ENCODE measurements at regions of chr7 and their contacts with region 1.

Region 1: GRCh38 chr7:26857510-26858240 is 6.7 kb downstream of the SKAP2 start:
- DNase-seq: peak; percentile 61
- ATAC-seq: peak; percentile 75
- H3K4me3 Mint-ChIP-seq: peak overlapping the region; percentile 62
- H3K27ac Mint-ChIP-seq: no peak overlapping the region
- H3K4me1 Mint-ChIP-seq: peaks cover 32% of the 10 kb centered on the region
- H3K27me3 Mint-ChIP-seq: peaks cover 86% of the 10 kb centered on the region
- CTCF ChIP-seq: no peak

Region 2: DNA sequence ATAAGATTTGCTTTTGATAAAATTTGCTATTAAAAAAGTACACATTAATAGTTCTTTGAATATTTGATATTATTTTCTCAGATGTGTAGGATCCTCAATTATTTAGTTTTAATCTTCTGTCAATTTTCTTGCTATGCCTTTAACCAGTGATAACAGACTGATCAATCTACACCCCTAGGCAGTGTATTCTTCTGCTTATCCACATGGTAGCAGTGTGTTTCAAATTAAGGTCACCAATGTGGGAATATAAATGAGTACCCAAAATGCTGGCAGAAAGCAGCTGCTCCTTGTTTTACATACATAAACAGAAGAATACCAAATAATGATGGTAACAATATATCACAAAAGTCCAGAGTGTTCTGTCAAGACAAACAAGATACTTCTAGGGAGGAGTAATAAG is 80.3 kb before region 1 on chr7:
- CTCF ChIA-PET with region 1: no interaction called
- POLR2A ChIA-PET with region 1: no interaction called
- DNase-seq: no peak
- ATAC-seq: no peak
- H3K4me3 Mint-ChIP-seq: no peak overlapping the region
- H3K27ac Mint-ChIP-seq: no peak overlapping the region
- H3K4me1 Mint-ChIP-seq: peaks cover 3% of the 10 kb centered on the region; the same call in 1 of the 2 replicates
- H3K27me3 Mint-ChIP-seq: no peaks in the 10 kb centered on the region
- CTCF ChIP-seq: no peak

Region 3: DNA sequence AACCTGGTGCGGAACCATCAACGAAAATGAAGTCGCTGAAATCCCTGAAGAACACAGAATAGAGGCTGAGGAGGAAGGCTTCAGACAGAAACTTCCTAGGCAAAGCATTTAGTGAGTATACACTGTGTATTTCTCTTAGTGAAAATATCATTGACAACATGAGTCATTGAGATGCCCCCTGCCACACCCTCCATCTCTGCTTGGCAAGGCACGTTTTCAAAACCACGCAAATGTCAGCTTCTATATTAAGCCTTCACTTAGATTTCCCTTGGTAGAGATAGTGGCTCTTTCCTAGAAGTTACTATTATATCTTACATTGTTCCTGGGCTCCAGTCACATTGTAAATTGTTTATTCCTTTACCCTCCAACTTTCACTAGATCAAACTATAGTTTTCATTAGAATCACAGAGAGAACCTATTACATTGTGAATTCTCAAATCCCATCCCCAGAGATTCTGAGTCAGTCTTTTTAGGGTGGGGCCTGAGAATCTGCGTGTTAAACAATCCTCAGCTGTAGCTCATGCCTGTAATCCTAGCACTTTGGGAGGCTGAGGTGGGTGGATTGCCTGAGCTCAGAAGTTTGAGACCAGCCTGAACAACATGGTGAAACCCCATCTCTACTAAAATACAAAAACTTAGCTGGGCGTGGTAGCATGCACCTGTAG is 11.3 kb after region 1 on chr7:
- CTCF ChIA-PET with region 1: no interaction called
- POLR2A ChIA-PET with region 1: no interaction called
- DNase-seq: no peak
- ATAC-seq: no peak
- H3K4me3 Mint-ChIP-seq: no peak overlapping the region
- H3K27ac Mint-ChIP-seq: no peak overlapping the region
- H3K4me1 Mint-ChIP-seq: peaks cover 1% of the 10 kb centered on the region; the same call in 1 of the 2 replicates
- H3K27me3 Mint-ChIP-seq: peaks cover 29% of the 10 kb centered on the region
- CTCF ChIP-seq: no peak

Region 4: DNA sequence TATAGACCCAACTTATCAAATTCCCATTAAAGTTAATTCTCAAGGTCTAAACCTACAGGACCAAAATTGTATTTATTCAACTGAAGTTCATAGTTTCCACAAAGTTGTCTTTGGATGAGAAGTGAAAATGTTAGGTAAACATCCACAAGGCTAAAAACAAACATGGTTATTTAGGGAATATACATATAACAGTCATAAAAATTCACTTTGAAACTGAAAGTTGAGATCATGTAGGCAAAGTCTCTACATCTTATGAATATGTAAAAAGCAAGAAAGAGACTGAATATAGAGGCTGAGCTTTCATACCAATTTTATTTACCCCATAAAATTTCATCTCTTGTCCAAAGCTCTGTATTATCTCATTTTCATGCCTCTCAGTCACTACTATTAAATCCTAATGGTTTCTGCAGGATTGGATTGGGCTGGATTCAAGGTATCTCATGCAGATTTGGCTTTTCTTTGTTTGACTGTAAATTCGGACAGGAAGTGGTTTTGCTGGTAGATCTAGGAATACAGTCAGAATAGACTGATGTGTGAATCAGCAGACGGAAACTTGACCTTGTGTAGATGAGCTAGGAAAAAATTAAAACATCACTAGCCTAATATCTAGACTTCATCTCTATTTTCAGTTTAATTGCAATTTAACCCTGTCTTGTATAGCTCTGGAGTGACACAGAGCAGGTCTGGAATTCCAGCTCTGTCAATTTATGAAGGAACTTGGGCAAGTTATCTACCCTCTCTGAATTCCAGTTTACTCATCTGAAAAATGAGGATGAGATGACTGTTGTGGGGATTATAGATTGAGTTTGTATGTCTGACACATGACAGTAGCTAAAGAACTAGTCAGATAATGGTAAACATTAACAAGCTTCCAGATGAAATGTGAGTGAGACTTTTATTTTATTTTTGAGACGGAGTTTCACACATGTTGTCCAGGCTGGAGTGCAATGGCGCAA is 34.0 kb after region 1 on chr7:
- CTCF ChIA-PET with region 1: no interaction called
- POLR2A ChIA-PET with region 1: no interaction called
- DNase-seq: no peak
- ATAC-seq: no peak
- H3K4me3 Mint-ChIP-seq: no peak overlapping the region
- H3K27ac Mint-ChIP-seq: no peak overlapping the region
- H3K4me1 Mint-ChIP-seq: no peaks in the 10 kb centered on the region
- H3K27me3 Mint-ChIP-seq: no peaks in the 10 kb centered on the region; the same call in 1 of the 2 replicates
- CTCF ChIP-seq: no peak

Region 5: DNA sequence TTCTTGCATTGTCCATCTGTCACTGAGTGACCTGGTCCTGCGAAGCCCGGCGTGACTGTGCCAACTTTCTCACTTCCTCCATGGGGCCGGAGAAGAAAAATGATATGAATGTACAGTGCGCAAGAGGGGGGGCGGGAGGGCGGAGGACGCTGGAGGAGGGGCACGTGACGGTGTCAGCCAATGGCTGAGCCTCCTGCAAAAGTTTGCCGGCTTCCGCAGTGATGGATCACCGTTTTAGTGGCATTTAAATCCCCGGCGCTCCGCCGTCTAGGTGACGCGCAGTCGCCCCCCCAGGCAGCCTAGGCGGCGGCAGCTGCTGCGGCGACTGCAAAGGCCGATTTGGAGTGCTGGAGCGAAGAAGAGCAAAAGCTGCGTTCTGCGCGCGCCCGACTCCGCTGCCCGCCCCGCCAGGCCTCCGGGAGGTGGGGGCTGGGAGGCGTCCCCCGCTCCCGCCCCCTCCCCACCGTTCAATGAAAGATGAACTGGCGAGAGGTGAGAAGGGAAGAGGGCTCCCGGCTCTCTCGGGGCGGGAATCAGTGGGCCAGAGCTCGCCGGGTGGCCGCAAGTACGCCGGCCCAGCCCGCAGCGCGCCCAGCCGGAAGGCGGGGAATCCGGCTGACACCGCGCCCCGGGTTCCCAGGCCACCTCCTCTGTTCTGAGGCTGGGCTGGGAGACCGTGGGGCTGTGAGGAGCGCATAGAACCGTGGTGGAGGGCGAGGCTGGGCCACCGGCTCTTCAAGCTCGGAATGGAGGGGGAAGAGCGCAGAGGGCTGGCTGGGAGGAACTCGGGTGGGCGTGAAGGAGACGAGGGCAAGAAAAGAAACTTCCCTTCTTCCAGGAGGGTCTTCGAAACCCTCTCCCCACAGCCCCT is 238.5 kb after region 1 on chr7 and contains the start of gene HOXA1:
- CTCF ChIA-PET with region 1: interaction called, 10 read pairs
- POLR2A ChIA-PET with region 1: no interaction called
- DNase-seq: peak; percentile 71
- ATAC-seq: peak; percentile 44
- H3K4me3 Mint-ChIP-seq: peak within 1 kb of the TSS; percentile 76
- H3K27ac Mint-ChIP-seq: no peak within 1 kb of the TSS
- H3K4me1 Mint-ChIP-seq: peaks cover 69% of the 10 kb centered on the region
- H3K27me3 Mint-ChIP-seq: peaks cover 100% of the 10 kb centered on the region
- CTCF ChIP-seq: no peak
- total RNA-seq, gene HOXA1: not detected in 3 replicates

Measured in WTC11 (cell line).